Activated naive CD8-positive, alpha-beta T cell treated with anti-CD3 and anti-CD28 coated beads, Interleukin-2, amount 10 ng/mL, durations not matched to agents 7 days and 5 days (primary cell): ENCODE measurements at regions of chr15 and their contacts with region 1.

Region 1: GRCh38 chr15:90665288-90666134 is 51.6 kb upstream of the BLM start:
- DNase-seq: peak; percentile 82
- ATAC-seq: peak; percentile 75
- H3K4me3 Mint-ChIP-seq: peak overlapping the region; percentile 85
- H3K27ac Mint-ChIP-seq: peak overlapping the region; percentile 97
- H3K4me1 Mint-ChIP-seq: peaks cover 44% of the 10 kb centered on the region
- H3K27me3 Mint-ChIP-seq: peaks cover 2% of the 10 kb centered on the region

Region 2: GRCh38 chr15:90648137-90649070 is 17.1 kb before region 1 on chr15:
- POLR2A ChIA-PET with region 1: interaction called, 35 read pairs
- DNase-seq: peak; percentile 59
- ATAC-seq: peak; percentile 74
- H3K4me3 Mint-ChIP-seq: peak overlapping the region; percentile 49
- H3K27ac Mint-ChIP-seq: peak overlapping the region; percentile 90
- H3K4me1 Mint-ChIP-seq: peaks cover 37% of the 10 kb centered on the region
- H3K27me3 Mint-ChIP-seq: no peaks in the 10 kb centered on the region

Region 3: DNA sequence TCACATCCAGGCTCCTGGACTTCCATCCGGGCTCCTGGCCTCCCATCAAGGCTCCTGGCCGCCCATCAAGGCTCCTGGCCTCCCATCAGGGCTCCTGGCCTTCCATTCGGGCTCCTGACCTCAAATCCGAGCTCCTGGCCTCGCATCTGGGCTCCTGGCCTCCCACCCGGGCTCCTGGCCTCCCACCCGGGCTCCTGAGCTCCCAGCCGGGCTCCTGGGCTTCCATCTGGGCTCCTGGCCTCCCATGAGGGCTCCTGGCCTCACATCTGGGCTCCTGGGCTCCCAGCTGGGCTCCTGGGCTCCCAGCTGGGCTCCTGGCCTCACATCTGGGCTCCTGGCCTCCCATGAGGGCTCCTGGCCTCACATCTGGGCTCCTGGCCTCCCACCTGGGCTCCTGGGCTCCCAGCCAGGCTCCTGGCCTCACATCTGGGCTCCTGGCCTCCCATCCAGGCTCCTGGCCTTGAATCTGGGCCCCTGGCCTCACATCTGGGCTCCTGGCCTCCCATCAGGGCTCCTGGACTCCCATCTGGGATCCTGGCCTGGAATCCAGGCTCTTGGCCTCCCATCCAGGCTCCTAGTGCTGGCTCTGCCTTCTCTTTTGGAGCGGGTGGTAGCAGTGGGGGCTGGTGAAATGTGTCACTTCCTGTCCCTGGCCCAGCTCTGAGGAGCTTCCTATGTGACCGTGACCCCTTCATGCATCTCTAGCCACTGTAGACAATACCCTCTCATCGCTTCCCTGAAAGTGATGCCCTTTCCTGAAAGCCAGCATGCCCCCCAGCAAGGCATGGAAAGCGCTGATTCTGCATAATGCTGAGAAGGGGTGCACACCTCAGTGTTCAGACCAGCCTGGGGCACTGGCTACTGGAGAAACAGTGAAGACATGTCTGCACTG is 11.0 kb before region 1 on chr15:
- POLR2A ChIA-PET with region 1: interaction called, 35 read pairs
- DNase-seq: peak; percentile 54
- ATAC-seq: peak; percentile 73
- H3K4me3 Mint-ChIP-seq: peak overlapping the region; percentile 39
- H3K27ac Mint-ChIP-seq: peak overlapping the region; percentile 85
- H3K4me1 Mint-ChIP-seq: peaks cover 56% of the 10 kb centered on the region
- H3K27me3 Mint-ChIP-seq: peaks cover 3% of the 10 kb centered on the region

Region 4: DNA sequence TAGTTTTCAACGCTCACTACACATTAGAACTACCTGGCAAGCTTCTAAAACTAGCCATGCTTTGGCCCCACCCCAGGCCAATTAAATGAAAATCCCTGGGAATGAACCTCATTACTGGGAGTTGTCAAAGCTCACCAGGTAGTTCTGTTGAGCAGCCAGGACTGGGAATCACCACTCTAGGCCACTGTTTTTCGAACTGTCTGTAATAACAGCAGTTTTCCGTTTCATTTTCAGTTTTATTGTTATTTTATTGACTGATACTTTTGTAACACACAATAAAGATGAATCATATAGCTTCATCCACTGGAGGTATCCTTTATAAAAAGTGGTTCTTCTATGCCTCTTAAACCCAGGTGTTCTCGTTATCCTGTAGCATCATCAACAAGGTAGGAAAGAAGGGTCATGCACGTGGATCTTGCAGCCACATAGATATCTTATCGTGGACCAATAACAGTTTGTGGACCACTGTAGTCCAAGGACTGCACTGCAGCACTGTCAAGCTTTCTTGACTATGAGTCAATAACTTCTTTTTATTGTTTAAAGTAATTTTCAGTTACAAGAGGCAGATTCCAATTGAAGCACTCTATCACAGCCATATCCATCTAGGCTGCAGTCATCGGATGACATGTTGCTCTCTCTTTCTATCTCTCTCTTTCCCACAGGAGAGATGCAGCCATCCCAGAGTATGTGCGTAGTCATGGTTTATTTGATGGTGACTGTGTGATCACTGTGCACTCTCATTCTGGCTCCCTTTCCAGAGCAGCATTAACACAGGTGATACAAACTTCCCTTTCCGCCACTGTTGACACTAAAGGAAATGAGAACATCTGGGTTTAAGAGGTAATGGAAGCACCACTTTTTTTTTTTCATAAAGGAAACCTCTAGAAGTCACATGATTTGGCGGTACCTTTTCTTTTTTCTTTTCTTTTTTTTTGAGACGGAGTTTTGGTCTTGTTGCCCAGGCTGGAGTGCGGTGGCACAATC is 12.6 kb after region 1 on chr15:
- POLR2A ChIA-PET with region 1: interaction called, 49 read pairs
- DNase-seq: peak; percentile 26
- ATAC-seq: peak; percentile 90
- H3K4me3 Mint-ChIP-seq: peak overlapping the region; percentile 79
- H3K27ac Mint-ChIP-seq: peak overlapping the region; percentile 95
- H3K4me1 Mint-ChIP-seq: peaks cover 35% of the 10 kb centered on the region
- H3K27me3 Mint-ChIP-seq: no peaks in the 10 kb centered on the region

Region 5: GRCh38 chr15:90686435-90687218 is 21.1 kb after region 1 on chr15:
- POLR2A ChIA-PET with region 1: interaction called, 25 read pairs
- DNase-seq: no peak
- ATAC-seq: peak; percentile 95
- H3K4me3 Mint-ChIP-seq: peak overlapping the region; percentile 69
- H3K27ac Mint-ChIP-seq: peak overlapping the region; percentile 96
- H3K4me1 Mint-ChIP-seq: peaks cover 40% of the 10 kb centered on the region
- H3K27me3 Mint-ChIP-seq: no peaks in the 10 kb centered on the region

Region 6: GRCh38 chr15:90716976-90717821 is 51.7 kb after region 1 on chr15 and contains the start of gene BLM:
- POLR2A ChIA-PET with region 1: interaction called, 11 read pairs
- DNase-seq: peak; percentile 93
- ATAC-seq: peak; percentile 99
- H3K4me3 Mint-ChIP-seq: peak within 1 kb of the TSS; percentile 96
- H3K27ac Mint-ChIP-seq: peak within 1 kb of the TSS; percentile 92
- H3K4me1 Mint-ChIP-seq: peaks cover 22% of the 10 kb centered on the region
- H3K27me3 Mint-ChIP-seq: no peaks in the 10 kb centered on the region
- total RNA-seq, gene BLM: 36.6 to 41.0 TPM

Region 7: DNA sequence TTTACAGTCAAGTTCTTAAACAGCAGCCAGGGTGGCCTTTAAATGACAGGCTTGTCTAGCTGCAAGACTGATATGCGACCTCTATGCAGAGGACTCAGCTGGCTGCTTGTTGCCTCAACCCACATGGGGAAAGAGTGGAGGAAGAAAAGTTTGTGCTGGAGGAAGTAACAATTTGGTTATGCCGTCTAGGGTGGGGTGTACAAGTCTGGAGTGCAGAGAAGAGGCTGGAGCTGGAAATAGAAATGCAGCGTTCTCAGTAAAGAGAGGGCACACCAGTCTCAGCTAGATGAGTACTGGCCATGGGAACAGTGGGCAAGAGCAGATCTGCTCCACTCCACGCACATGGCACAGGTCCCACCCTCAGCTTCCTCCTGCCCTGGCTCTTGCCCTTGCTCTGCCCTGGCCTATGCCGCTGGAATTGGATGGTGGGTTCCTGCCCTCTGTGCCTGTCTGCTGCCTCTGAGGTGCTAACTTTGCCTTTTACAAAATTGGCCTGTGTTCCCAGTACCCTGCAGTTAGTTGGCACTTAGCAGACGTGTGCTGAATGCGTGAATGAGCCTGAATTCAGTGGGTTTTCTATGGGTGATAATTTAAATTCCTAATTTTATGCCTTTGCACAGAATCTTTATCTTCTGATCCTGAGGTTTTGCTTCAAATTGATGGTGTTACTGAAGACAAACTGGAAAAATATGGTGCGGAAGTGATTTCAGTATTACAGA is 143.2 kb after region 1 on chr15:
- POLR2A ChIA-PET with region 1: no interaction called
- DNase-seq: no peak
- ATAC-seq: no peak
- H3K4me3 Mint-ChIP-seq: no peak overlapping the region
- H3K27ac Mint-ChIP-seq: peak overlapping the region; percentile 10
- H3K4me1 Mint-ChIP-seq: peaks cover 43% of the 10 kb centered on the region
- H3K27me3 Mint-ChIP-seq: no peaks in the 10 kb centered on the region